A673 (cell line): ENCODE measurements at regions of chr1 and their contacts with region 1.

Region 1: DNA sequence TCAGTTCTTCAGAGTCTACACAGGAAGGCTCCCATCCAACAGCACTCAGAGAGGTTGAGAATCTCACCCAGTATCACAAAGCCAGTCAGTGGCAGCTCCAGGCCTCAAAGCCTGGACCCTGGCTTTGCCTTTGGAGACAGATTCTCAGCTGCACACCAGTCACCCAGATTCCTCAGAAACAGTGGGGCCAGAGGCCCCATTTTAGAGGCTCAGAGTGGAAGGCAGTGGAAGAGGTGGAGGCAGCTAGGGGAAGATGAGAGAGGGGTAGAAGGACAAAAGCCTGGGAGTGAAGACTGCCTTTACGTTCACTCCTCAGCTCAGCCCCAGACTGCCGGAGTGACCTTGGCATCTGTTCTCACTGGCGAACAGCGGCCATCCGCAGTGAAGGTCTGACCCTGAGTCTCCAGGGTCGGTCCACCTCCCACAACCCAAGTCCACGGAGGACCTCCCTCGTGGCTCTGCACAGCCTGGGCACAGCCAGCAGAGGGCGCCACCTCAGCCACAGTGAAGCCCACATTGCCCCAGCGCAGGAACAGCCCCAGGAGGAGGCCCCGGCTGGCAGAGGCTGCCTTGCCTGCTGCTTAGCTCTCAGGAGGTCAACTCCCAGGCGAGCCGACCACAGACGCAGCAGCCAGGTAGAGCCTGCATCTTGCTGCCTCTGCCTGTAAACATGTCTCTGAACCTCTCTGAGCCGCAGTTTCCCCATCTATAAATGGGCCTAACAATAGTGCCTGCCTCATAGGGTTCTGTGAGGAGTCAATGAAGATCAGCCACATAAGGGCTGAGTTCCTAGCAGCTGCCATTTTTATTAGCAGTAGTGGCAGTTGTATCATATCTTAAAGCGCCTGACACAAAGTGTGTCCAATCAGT is 5.9 kb upstream of the FNDC5 start:
- DNase-seq: peak; percentile 69
- H3K4me3 ChIP-seq: no peak overlapping the region
- H3K27ac ChIP-seq: no peak overlapping the region
- H3K4me1 ChIP-seq: no peaks in the 10 kb centered on the region
- H3K27me3 ChIP-seq: no peaks in the 10 kb centered on the region
- CTCF ChIP-seq: peak; percentile 99

Region 2: GRCh38 chr1:32892368-32893197 is 16.0 kb after region 1 on chr1:
- CTCF ChIA-PET with region 1: interaction called, 13 read pairs
- POLR2A ChIA-PET with region 1: no interaction called
- intact Hi-C with region 1: no loop called
- DNase-seq: peak; percentile 81
- H3K4me3 ChIP-seq: peak overlapping the region; percentile 55
- H3K27ac ChIP-seq: no peak overlapping the region
- H3K4me1 ChIP-seq: peaks cover 14% of the 10 kb centered on the region
- H3K27me3 ChIP-seq: peaks cover 2% of the 10 kb centered on the region
- CTCF ChIP-seq: peak; percentile 64

Region 3: GRCh38 chr1:33086384-33086850 is 209.8 kb after region 1 on chr1:
- CTCF ChIA-PET with region 1: interaction called, 9 read pairs
- POLR2A ChIA-PET with region 1: no interaction called
- intact Hi-C with region 1: loop called (anchors 1 kb)
- DNase-seq: peak; percentile 63
- H3K4me3 ChIP-seq: no peak overlapping the region
- H3K27ac ChIP-seq: no peak overlapping the region
- H3K4me1 ChIP-seq: no peaks in the 10 kb centered on the region
- H3K27me3 ChIP-seq: no peaks in the 10 kb centered on the region
- CTCF ChIP-seq: peak; percentile 77